Calu3 (cell line): ENCODE measurements at regions of chr9 and their contacts with region 1.

Region 1: GRCh38 chr9:21110708-21111576 is 30.7 kb downstream of the IFNW1 start:
- DNase-seq: peak; percentile 26
- H3K4me3 Mint-ChIP-seq: no peak overlapping the region
- H3K27ac Mint-ChIP-seq: no peak overlapping the region
- H3K4me1 Mint-ChIP-seq: no peaks in the 10 kb centered on the region
- H3K27me3 Mint-ChIP-seq: no peaks in the 10 kb centered on the region
- CTCF ChIP-seq: peak; percentile 42

Region 2: GRCh38 chr9:19925817-19926503 is 1185.0 kb before region 1 on chr9:
- CTCF ChIA-PET with region 1: no interaction called
- intact Hi-C with region 1: loop called (anchors 2 kb)
- DNase-seq: peak; percentile 78
- H3K4me3 Mint-ChIP-seq: peak overlapping the region; percentile 64
- H3K27ac Mint-ChIP-seq: no peak overlapping the region
- H3K4me1 Mint-ChIP-seq: no peaks in the 10 kb centered on the region
- H3K27me3 Mint-ChIP-seq: peaks cover 35% of the 10 kb centered on the region
- CTCF ChIP-seq: peak; percentile 83

Region 3: DNA sequence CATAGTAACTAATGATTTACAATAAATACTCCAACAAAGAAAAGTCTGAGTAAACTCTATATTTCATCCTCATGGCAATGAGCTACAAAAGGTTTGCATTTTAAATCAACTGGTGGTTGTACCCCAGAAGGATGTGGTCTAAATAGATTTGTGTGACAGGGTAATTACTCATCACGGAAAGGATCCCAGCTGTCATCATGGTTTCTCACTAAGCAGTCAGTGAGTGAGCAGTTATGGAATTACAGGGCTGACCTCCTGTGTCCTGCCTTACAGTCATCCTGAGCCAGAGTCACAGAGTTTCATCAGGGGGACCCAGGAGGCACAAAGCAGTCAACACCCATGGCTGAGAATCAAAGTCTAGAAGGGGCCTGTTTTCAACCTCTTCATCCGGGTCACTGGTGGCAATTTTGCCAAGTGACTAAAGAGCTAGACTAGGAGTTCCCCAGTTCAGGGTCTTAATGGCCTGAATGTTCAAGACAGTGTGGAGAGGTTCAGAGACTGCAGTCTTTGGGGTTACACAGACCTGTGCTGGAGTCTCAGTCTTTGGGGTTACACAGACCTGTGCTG is 1111.4 kb before region 1 on chr9:
- CTCF ChIA-PET with region 1: no interaction called
- intact Hi-C with region 1: no loop called
- DNase-seq: no peak
- H3K4me3 Mint-ChIP-seq: no peak overlapping the region
- H3K27ac Mint-ChIP-seq: no peak overlapping the region
- H3K4me1 Mint-ChIP-seq: no peaks in the 10 kb centered on the region
- H3K27me3 Mint-ChIP-seq: no peaks in the 10 kb centered on the region
- CTCF ChIP-seq: no peak

Region 4: DNA sequence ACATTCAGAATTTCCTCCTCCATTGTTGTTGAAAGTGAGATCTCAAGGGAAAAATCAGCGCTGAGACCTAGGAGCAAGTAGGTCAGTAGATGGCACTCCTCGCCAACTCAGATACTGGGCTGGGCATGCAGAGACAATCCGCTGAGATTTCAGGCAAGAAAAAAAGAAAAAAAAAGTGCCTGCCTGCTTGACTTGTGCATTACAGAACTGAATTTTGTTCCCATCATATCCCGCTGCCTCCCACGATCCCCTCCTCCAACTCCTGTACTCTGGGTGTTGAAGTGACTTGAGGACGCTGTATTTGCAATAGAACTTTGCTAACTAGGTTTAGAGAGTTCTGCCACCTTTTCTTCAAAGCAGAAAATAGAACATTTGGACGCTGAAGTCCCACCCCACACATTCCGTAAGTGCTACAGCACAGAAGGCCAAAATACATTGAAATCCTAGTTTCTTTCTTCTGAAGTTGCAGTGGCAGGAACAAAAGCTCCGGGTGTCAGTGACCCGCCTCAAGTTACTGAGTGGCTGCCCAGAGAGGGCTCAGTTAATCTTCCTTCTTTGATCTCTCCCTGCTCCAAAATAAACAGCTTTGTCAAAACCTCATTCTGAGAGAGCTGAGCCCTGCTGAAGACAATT is 754.4 kb before region 1 on chr9:
- CTCF ChIA-PET with region 1: no interaction called
- intact Hi-C with region 1: loop called (anchors 5 kb)
- DNase-seq: peak; percentile 56
- H3K4me3 Mint-ChIP-seq: peak overlapping the region; percentile 49
- H3K27ac Mint-ChIP-seq: peak overlapping the region; percentile 81
- H3K4me1 Mint-ChIP-seq: peaks cover 23% of the 10 kb centered on the region
- H3K27me3 Mint-ChIP-seq: no peaks in the 10 kb centered on the region
- CTCF ChIP-seq: peak; percentile 24

Region 5: DNA sequence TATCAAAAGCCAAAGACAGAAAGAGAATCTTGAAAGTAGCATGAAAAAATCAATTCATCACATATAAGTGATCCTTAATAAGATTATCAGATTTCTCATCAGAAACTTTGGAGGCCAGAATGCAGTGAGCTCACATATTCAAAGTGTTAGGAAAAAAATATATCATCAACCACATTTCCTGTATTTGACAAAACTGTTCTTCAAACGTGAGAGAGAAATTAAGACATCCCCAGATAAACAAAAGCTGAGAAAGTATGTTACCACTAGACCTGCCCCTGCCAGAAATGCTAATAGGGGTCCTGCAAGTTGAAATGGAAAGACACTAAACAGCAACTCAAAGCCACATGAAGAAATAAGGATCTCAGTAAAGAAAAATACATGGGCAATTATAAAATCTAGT is 109.4 kb before region 1 on chr9:
- CTCF ChIA-PET with region 1: no interaction called
- intact Hi-C with region 1: loop called (anchors 10 kb)
- DNase-seq: no peak
- H3K4me3 Mint-ChIP-seq: no peak overlapping the region
- H3K27ac Mint-ChIP-seq: no peak overlapping the region
- H3K4me1 Mint-ChIP-seq: no peaks in the 10 kb centered on the region
- H3K27me3 Mint-ChIP-seq: no peaks in the 10 kb centered on the region
- CTCF ChIP-seq: no peak

Region 6: DNA sequence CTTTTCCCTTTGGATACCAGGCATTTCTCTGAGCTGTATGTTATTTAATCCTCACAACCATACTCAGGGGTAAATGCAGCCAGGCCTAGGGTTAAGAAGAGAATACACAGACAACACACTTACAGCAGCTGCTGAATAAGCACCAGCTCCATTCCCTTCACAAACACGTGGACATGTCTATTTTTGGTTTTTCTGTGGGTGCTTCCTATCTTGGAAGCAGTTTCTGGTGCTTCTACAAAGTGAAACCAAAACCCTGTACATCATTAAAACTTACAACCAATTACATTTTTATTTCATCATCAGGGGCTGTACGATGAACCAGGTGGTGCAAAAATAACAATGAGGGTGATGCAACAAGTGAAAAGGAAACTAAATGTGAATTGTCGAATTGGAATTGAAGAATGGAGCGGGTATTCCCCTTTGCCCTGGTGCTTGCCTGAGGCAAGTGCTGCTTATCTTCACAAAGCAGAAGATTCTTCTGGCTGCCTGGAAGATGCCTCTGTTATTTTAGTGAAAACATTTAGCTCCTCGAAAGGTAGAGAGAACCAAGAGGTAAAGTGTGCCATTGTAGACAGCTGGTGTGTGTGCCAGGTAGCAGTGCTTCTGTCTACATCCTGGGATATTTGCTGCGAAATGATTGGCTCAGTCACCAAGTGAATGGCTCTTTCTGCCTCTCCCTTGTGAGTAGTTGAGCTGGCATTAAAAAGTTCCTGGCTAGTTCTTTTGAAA is 14.6 kb before region 1 on chr9:
- CTCF ChIA-PET with region 1: interaction called, 11 read pairs
- intact Hi-C with region 1: no loop called
- DNase-seq: peak; percentile 7
- H3K4me3 Mint-ChIP-seq: peak overlapping the region; percentile 54
- H3K27ac Mint-ChIP-seq: peak overlapping the region; percentile 89
- H3K4me1 Mint-ChIP-seq: peaks cover 26% of the 10 kb centered on the region
- H3K27me3 Mint-ChIP-seq: no peaks in the 10 kb centered on the region
- CTCF ChIP-seq: no peak